Transverse colon (tissue), 4 donors: ENCODE measurements at regions of chr11 and their contacts with region 1.

Region 1: GRCh38 chr11:15688351-15688792 is 573.6 kb downstream of the INSC start:
- DNase-seq: no peak
- H3K4me3 ChIP-seq: no peak overlapping the region
- H3K27ac ChIP-seq: no peak overlapping the region
- H3K4me1 ChIP-seq: no peaks in the 10 kb centered on the region
- H3K27me3 ChIP-seq: no peaks in the 10 kb centered on the region
- CTCF ChIP-seq: no peak
- EP300 ChIP-seq: no peak
- POLR2A ChIP-seq: no peak

Region 2: DNA sequence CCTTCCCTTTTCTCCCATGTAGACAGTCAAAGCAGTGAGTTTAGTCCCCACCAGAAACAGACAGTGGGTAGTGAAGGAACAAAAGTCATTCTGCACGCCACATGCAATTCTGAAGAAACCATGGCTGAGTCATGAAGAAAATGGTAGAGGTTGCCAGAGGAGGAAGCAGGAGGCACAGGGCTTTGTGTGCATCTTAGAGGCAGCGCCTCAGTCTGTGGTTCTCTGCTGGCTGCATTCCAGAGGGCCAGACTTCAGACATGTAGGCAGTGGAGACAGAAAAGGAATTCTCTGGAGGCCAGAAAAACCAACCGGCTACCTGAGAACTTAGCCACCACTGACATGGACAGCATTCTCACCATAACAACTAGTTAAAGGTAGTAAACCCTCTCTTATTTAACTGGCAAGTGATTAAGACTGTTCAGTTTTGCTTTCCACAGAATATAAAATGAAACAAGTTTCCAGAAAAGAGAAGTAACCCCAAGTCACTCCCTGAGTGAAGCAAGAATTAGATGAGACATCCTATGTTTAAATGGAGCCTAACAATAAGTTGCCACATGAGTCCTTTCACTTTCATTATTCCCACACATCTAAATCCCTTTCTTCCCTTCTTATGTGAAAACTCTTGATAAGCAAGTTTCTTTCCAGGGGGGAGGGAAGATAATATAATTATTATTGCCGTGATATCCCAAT is 111.9 kb after region 1 on chr11:
- in situ Hi-C with region 1: no loop called
- intact Hi-C with region 1: no loop called
- DNase-seq: peak; percentile 21
- H3K4me3 ChIP-seq: no peak overlapping the region
- H3K27ac ChIP-seq: peak overlapping the region; percentile 14 to 33 (median 23)
- H3K4me1 ChIP-seq: peaks cover 0 to 3% (median 0%) of the 10 kb centered on the region in 4 donors
- H3K27me3 ChIP-seq: no peaks in the 10 kb centered on the region
- CTCF ChIP-seq: no peak
- EP300 ChIP-seq: no peak
- POLR2A ChIP-seq: no peak

Region 3: DNA sequence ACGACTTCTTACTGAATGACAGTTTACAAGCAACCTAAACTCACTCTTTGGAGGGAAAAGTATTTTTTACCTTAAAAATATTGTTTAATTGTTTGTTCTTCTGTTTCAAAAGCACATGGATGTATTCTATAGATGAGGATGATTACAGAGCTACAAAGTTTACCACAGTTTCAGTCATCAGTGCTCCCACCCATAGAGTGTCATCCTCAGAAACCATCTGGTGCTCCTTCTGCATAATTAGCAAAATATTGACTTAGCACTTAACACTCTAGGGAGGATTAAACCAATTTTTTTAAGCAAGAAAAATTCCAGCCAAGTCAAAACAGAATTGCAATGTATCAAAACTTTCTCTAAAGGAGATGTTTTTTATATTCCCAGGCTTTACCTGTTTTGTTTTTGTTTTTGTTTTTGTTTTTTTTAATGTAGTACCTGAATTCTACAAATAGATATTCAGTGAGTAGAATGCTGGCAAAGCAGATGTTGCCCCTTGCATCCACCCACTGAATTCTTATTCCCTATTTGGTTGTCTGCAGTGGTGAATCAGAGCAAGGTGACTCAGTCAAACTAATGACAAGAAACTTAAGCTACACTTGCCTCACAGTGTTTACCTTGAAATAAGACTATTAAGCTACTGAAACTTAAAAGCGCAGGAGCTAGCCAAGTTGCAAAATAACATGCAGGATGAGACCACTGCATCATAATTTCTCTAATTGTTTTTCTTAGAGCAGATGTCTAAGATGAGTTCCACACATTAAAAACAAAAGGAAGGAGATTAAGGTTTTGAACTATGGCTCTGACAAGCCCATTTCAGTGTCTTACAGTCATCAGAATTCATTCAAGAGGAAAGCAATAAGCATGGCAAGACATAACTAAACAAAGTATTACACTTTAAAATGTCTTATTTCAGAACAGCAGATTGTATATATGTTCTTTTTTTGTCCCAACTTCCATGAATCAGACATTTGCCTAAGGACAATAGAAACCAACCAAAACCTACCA is 823.0 kb after region 1 on chr11:
- in situ Hi-C with region 1: no loop called
- intact Hi-C with region 1: loop called (anchors 2 kb)
- DNase-seq: no peak
- H3K4me3 ChIP-seq: no peak overlapping the region
- H3K27ac ChIP-seq: no peak overlapping the region
- H3K4me1 ChIP-seq: no peaks in the 10 kb centered on the region
- H3K27me3 ChIP-seq: no peaks in the 10 kb centered on the region
- CTCF ChIP-seq: no peak
- EP300 ChIP-seq: no peak
- POLR2A ChIP-seq: no peak